Calu3 (cell line): ENCODE measurements at regions of chr17 and their contacts with region 1.

Region 1: GRCh38 chr17:41738077-41738735 is 3.8 kb upstream of the HAP1 start:
- DNase-seq: peak; percentile 91
- H3K4me3 Mint-ChIP-seq: no peak overlapping the region
- H3K27ac Mint-ChIP-seq: no peak overlapping the region
- H3K4me1 Mint-ChIP-seq: peaks cover 19% of the 10 kb centered on the region
- H3K27me3 Mint-ChIP-seq: peaks cover 48% of the 10 kb centered on the region
- CTCF ChIP-seq: peak; percentile 100

Region 2: GRCh38 chr17:41538565-41538991 is 199.6 kb before region 1 on chr17:
- CTCF ChIA-PET with region 1: no interaction called
- intact Hi-C with region 1: no loop called
- DNase-seq: no peak
- H3K4me3 Mint-ChIP-seq: no peak overlapping the region
- H3K27ac Mint-ChIP-seq: no peak overlapping the region
- H3K4me1 Mint-ChIP-seq: peaks cover 86% of the 10 kb centered on the region
- H3K27me3 Mint-ChIP-seq: no peaks in the 10 kb centered on the region
- CTCF ChIP-seq: no peak

Region 3: GRCh38 chr17:41777574-41778188 is 39.5 kb after region 1 on chr17:
- CTCF ChIA-PET with region 1: interaction called, 4 read pairs
- intact Hi-C with region 1: loop called (anchors 5 kb)
- DNase-seq: peak; percentile 50
- H3K4me3 Mint-ChIP-seq: peak overlapping the region; percentile 43
- H3K27ac Mint-ChIP-seq: peak overlapping the region; percentile 87
- H3K4me1 Mint-ChIP-seq: peaks cover 86% of the 10 kb centered on the region
- H3K27me3 Mint-ChIP-seq: no peaks in the 10 kb centered on the region
- CTCF ChIP-seq: no peak

Region 4: GRCh38 chr17:41959336-41960095 is 221.3 kb after region 1 on chr17:
- CTCF ChIA-PET with region 1: interaction called, 3 read pairs
- intact Hi-C with region 1: loop called (anchors 5 kb)
- DNase-seq: peak; percentile 51
- H3K4me3 Mint-ChIP-seq: no peak overlapping the region
- H3K27ac Mint-ChIP-seq: no peak overlapping the region
- H3K4me1 Mint-ChIP-seq: peaks cover 25% of the 10 kb centered on the region
- H3K27me3 Mint-ChIP-seq: peaks cover 23% of the 10 kb centered on the region
- CTCF ChIP-seq: peak; percentile 9